AG04450 (cell line): ENCODE measurements at regions of chr6 and their contacts with region 1.

Region 1: DNA sequence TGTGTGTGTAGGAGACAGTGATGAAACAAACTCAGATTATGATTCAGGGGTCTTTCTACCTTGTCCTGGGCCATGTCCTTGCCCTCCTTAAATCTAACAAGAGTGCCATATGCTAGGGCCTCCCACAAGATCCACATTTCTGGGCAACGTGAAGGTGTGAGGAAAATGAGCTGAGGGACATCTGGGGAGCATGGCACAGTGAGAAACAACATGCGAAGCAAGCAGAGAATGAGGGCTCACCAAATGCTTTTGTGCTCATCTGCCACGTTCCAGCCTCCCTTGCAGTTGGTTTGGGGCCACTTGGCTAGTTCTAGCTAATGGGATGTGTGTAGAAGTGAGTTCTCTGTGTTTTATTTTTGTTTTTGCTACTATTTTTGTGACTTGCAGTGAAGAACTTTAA is 21.4 kb upstream of the RNF182 start:
- DNase-seq: no peak
- H3K4me3 ChIP-seq: no peak overlapping the region
- H3K27ac ChIP-seq: no peak overlapping the region
- H3K27me3 ChIP-seq: peaks cover 14% of the 10 kb centered on the region
- CTCF ChIP-seq: no peak

Region 2: GRCh38 chr6:14885498-14885897 is 982.1 kb after region 1 on chr6:
- CTCF ChIA-PET with region 1: no interaction called
- POLR2A ChIA-PET with region 1: interaction called, 10 read pairs
- DNase-seq: no peak
- H3K4me3 ChIP-seq: no peak overlapping the region
- H3K27ac ChIP-seq: no peak overlapping the region
- H3K27me3 ChIP-seq: no peaks in the 10 kb centered on the region
- CTCF ChIP-seq: no peak